Lower leg skin (tissue), 4 donors: ENCODE measurements at regions of chr6 and their contacts with region 1.

Region 1: DNA sequence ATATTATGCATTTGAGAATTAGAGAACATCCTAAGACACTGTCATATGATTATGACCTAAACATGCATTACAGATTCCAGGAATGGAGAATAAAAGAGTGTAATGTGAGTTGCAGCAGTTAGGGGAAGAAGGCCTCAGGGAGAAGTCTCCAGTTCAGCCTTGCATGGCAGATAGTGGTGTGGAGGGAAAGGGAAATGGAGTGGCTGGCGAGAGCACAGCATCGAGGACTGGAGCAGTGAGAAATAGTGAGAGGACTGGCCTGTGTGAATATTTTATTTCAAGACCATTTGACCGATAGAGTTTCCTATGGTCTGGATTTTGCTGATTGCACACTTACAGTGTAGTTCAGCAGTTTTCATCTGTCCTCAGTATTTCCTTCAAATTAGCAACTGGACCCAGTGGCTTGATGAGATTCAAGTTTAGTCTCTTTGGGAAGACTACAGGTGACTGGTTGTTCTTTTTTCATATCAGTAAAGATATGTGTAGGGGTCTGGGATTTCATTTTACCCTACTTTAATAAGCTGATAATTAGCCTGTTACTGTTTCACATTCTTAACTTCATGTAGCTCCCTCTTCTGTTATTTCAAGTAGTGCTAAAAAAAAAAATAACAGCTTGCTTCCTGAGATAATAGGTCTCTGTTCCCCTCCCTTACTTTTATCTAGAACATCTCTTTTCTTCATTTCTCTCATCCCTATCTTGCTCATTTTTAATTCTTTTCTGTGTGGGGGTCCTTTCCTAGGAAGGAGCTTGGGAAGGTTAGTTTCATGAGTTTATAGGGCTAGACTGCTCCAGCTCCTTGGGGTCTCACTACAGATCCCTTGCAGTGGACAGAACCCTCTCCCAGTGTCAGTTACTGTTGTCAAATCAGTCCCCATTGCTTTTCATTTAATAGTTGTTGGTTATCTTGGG is 27.9 kb downstream of the BLTP3A start:
- DNase-seq: no peak
- H3K4me3 ChIP-seq: no peak overlapping the region
- CTCF ChIP-seq: no peak
- POLR2A ChIP-seq: no peak

Region 2: GRCh38 chr6:34709386-34709785 is 110.4 kb before region 1 on chr6:
- intact Hi-C with region 1: no loop called
- DNase-seq: peak in 1 of 2 donors; percentile 26
- H3K4me3 ChIP-seq: no peak overlapping the region
- CTCF ChIP-seq: no peak
- POLR2A ChIP-seq: no peak

Region 3: GRCh38 chr6:34804543-34804942 is 15.3 kb before region 1 on chr6:
- intact Hi-C with region 1: loop called (anchors 1 kb)
- DNase-seq: no peak
- H3K4me3 ChIP-seq: no peak overlapping the region
- CTCF ChIP-seq: no peak
- POLR2A ChIP-seq: no peak